ENCODE measurements at regions of chr7 and their contacts with region 1.

Region 1: GRCh38 chr7:151754142-151754590 is 122.7 kb downstream of the PRKAG2 start:
- DNase-seq: peak; percentile 73 to 78 (median 76)
- ATAC-seq: peak; percentile 97
- H3K4me3 ChIP-seq: no peak overlapping the region
- H3K27ac ChIP-seq: no peak overlapping the region
- H3K4me1 ChIP-seq: peaks cover 0 to 12% of the 10 kb centered on the region in 2 experiments; a peak in 3 of 5 replicates
- H3K27me3 ChIP-seq: peaks cover 30 to 57% of the 10 kb centered on the region in 2 experiments; a peak in 4 of 5 replicates
- CTCF ChIP-seq: peak; percentile 90 to 99 (median 91)
- EP300 ChIP-seq: no peak
- POLR2A ChIP-seq: no peak
- RAD21 ChIP-seq: peak; percentile 27 to 69; a peak in 3 of 4 replicates

Region 2: GRCh38 chr7:152025077-152025936 is 271.1 kb after region 1 on chr7 and contains the start of gene GALNT11:
- CTCF ChIA-PET with region 1: no interaction called
- POLR2A ChIA-PET with region 1: no interaction called
- in situ Hi-C with region 1: no loop called
- intact Hi-C with region 1: loop called (anchors 1 kb)
- DNase-seq: peak; percentile 97 to 99 (median 98)
- ATAC-seq: peak; percentile 99
- H3K4me3 ChIP-seq: peak within 1 kb of the TSS; percentile 71
- H3K27ac ChIP-seq: peak within 1 kb of the TSS; percentile 86
- H3K4me1 ChIP-seq: peaks cover 3 to 15% of the 10 kb centered on the region in 2 experiments; a peak in 3 of 5 replicates
- H3K27me3 ChIP-seq: peaks cover 4 to 13% of the 10 kb centered on the region in 2 experiments; a peak in 4 of 5 replicates
- CTCF ChIP-seq: peak; percentile 17 to 78 (median 52); a peak in 4 of 6 replicates
- EP300 ChIP-seq: no peak; the same call in 1 of the 2 replicates
- POLR2A ChIP-seq: peak; percentile 92
- RAD21 ChIP-seq: no peak
- polyA plus RNA-seq, gene GALNT11: 8.2 to 11.1 TPM